Activated CD4-positive, alpha-beta memory T cell treated with anti-CD3 and anti-CD28 coated beads for 36 hours (primary cell): ENCODE measurements at regions of chr19 and their contacts with region 1.

Region 1: GRCh38 chr19:40444192-40445028 is at the start of gene SERTAD3:
- DNase-seq: peak; percentile 97
- H3K4me3 Mint-ChIP-seq: peak within 1 kb of the TSS; percentile 97
- H3K27ac Mint-ChIP-seq: peak within 1 kb of the TSS; percentile 92
- H3K4me1 Mint-ChIP-seq: peaks cover 14% of the 10 kb centered on the region
- H3K27me3 Mint-ChIP-seq: no peaks in the 10 kb centered on the region
- total RNA-seq, gene SERTAD3: 12.1 to 13.1 TPM

Region 2: GRCh38 chr19:40035996-40036395 is 408.4 kb before region 1 on chr19:
- CTCF ChIA-PET with region 1: no interaction called
- POLR2A ChIA-PET with region 1: no interaction called
- intact Hi-C with region 1: no loop called
- DNase-seq: no peak
- H3K4me3 Mint-ChIP-seq: no peak overlapping the region
- H3K27ac Mint-ChIP-seq: no peak overlapping the region
- H3K4me1 Mint-ChIP-seq: no peaks in the 10 kb centered on the region
- H3K27me3 Mint-ChIP-seq: no peaks in the 10 kb centered on the region

Region 3: DNA sequence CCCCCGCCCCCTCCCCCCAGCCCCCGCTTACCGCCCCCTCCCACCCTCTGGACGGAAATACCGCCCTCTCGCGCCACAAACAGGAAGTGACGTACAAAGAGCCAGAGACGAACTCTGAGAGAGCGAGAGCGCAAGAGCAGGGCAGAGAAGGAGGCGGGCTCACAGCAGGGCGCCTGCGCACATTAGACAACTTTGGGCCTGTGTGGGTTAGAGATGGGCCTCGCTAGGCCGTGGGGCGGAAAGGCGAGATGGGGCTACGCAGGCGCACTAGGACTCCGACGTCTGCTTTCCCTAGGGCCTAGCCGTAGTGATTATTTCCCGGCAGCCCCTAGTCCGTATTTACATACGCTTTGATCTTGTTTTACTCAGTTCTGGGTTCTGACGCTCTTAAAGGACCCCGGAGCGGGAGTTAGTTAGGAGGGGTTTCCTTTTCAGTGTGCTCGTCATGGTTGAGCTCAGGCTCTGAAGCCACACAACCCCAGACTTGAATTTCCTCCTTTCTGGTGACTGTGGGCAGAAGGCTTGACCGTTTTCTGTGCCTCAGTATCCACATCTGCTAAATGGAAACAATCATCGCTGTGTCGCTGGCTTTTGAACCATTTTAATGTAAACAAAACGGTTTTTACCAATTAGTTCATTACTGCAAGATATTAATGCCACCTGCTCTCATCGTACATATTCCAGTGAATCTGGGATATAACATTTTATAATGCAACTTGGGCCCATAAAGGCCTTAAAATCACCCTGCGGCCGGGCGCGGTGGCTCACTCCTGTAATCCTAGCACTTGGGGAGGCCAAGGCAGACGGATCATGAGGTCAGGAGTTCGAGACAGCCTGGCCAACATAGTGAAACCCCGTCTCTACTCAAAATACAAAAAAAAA is 158.8 kb before region 1 on chr19:
- CTCF ChIA-PET with region 1: no interaction called
- POLR2A ChIA-PET with region 1: no interaction called
- intact Hi-C with region 1: loop called (anchors 1 kb)
- DNase-seq: peak; percentile 99
- H3K4me3 Mint-ChIP-seq: peak overlapping the region; percentile 87
- H3K27ac Mint-ChIP-seq: peak overlapping the region; percentile 99
- H3K4me1 Mint-ChIP-seq: peaks cover 43% of the 10 kb centered on the region
- H3K27me3 Mint-ChIP-seq: no peaks in the 10 kb centered on the region

Region 4: DNA sequence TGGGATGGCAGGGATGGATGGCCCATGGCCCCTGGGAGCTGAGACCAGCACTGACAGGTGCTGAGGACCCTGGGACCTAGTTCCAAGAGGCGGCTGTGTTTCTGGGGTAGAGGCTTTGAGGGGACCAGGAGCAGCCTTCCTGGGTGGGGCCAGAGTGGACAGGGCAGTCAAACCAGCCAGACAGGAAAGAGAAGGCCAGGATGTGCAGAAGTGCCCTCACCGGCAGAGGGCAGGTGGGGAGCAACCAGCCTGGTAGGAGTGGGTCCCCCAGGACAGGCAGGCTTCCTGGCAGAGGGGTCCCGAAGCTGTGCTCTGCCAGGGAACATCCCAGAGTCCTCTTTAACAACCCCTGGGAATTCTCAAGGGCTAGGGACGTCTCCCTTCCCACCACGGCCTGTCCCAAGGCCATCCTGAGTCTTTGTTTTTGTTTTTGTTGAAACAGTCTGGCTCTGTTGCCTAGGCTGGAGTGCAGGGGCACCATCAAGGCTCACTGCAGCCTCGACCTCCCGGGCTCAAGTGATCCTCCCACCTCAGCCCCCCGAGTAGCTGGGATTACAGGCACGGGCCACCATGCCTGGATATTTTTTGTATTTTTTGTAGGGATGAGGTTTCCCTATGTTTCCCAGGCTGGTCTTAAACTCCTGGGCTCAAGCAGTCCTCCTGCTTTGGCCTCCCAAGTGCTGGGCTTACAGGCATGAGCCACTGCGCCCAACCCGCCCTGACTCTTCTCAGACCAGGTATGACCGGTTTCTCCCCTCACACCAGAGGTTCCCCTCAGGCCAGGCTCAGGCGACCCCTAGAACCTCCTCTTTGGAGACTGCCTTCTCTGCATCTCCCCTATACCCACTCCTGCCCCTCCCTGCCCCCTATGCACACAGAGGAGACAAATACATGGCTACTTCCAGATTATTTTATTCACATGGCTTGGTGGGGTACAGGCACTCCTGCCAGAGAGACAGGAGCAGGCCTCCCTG is 51.3 kb before region 1 on chr19:
- CTCF ChIA-PET with region 1: no interaction called
- POLR2A ChIA-PET with region 1: no interaction called
- intact Hi-C with region 1: no loop called
- DNase-seq: no peak
- H3K4me3 Mint-ChIP-seq: no peak overlapping the region
- H3K27ac Mint-ChIP-seq: no peak overlapping the region
- H3K4me1 Mint-ChIP-seq: no peaks in the 10 kb centered on the region
- H3K27me3 Mint-ChIP-seq: no peaks in the 10 kb centered on the region

Region 5: DNA sequence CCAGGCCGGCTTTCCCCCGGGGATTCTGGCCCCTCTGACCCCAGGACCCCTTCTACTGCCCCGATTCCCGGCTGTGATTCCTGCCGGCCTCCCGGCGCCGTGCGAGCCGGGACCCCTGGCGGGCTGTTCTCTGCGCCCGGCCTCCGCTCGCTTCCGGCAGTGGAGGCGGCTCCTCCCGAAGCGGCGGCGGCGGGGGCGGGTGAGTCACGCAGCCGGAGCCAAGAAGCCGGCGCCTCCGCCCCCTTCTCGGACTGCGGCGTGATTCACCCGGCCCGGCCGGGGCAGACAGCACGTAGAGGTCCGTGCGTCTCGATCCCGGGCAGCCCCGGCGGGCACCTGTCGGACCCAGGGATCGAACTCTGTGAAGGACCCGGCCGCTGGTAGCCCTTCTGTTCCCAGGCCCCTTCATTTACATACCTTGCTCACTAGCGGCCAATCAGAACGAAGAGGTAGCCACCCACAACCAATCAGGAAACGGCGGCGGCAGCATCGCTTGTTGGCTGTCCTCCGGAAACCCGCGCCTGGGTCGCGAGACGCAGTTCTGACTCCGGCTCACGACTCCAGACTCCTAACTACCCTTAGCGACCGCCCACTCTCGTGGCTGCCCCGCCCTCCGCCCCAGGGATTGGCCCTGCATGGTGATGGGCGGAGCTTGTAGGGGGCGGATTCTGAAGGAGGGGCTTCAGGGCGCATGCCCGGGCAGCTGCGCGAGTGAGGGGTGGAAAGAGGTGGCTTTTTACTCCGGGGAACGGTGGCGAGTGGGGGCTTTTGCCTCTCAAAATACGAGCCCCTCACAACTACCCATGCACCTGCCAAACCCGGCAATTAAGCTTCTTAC is 18.7 kb before region 1 on chr19 and contains the start of gene SERTAD1:
- CTCF ChIA-PET with region 1: interaction called, 16 read pairs
- POLR2A ChIA-PET with region 1: interaction called, 25 read pairs
- intact Hi-C with region 1: loop called (anchors 1 kb)
- DNase-seq: peak; percentile 100
- H3K4me3 Mint-ChIP-seq: peak within 1 kb of the TSS; percentile 81
- H3K27ac Mint-ChIP-seq: peak within 1 kb of the TSS; percentile 88
- H3K4me1 Mint-ChIP-seq: peaks cover 17% of the 10 kb centered on the region
- H3K27me3 Mint-ChIP-seq: no peaks in the 10 kb centered on the region
- total RNA-seq, gene SERTAD1: 11.5 to 12.6 TPM

Region 6: DNA sequence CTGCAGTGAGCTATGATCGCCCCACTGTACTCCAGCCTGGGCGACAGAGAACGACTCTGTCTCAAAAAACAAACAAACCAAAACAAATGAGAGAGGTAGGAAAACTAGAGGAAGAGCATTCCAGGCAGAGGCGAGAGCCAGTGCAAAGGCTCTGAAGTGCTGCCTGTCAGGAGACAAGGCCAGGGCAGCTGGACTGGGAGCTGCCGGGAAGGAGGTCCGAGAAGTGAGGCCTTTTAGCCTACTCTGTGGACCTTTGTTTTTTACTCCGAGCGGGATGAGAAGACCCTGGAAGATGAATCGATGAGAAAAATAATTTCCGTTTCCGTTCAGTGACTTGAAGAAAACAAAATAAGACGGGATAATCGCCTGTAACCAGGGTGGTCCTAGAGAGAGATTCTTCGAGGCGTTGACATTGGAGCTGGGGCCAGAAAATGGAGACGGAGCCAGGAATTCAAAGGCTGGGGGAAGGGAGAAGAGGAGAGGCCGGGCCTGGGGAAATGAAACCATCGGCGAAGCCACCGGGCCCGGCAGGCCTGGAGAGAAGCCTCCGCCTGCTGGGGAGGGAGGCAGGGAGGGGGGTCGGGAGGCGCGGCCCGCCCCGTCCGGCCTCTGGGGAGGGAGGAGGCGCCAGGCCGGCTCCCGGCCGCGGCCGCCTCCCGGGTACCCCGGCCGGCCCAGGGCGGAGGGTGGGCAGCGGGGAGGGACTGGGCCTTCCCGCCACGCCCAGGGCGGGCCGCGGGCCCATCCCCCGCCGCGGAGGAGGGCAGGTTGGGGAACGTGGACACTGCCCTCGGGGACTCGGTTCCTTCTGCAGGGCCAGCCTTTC is 10.8 kb before region 1 on chr19:
- CTCF ChIA-PET with region 1: interaction called, 3 read pairs
- POLR2A ChIA-PET with region 1: interaction called, 9 read pairs
- intact Hi-C with region 1: loop called (anchors 1 kb)
- DNase-seq: peak; percentile 69
- H3K4me3 Mint-ChIP-seq: peak overlapping the region; percentile 80
- H3K27ac Mint-ChIP-seq: peak overlapping the region; percentile 88
- H3K4me1 Mint-ChIP-seq: peaks cover 6% of the 10 kb centered on the region
- H3K27me3 Mint-ChIP-seq: no peaks in the 10 kb centered on the region

Region 7: DNA sequence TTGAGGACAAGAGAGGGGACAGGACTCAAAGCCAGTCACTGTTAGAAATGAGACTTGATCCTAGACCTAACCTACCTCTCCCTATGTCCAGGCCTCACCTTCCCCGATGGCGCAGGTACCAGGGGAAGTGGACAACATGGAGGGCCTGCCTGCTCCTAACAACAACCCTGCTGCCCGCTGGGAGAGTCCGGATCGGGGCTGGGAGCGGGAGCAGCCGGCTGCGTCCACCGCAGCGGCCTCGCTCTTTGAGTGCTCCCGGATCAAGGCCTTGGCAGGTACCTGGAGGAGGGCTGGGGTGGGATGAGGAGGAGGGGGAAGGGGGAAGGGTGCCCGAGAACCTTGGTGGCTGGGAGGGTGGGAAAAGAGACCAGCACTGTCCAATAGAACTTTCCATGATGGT is 28.1 kb after region 1 on chr19:
- CTCF ChIA-PET with region 1: no interaction called
- POLR2A ChIA-PET with region 1: no interaction called
- intact Hi-C with region 1: no loop called
- DNase-seq: no peak
- H3K4me3 Mint-ChIP-seq: no peak overlapping the region
- H3K27ac Mint-ChIP-seq: no peak overlapping the region
- H3K4me1 Mint-ChIP-seq: peaks cover 2% of the 10 kb centered on the region
- H3K27me3 Mint-ChIP-seq: peaks cover 5% of the 10 kb centered on the region

Region 8: GRCh38 chr19:40570313-40571004 is 126.0 kb after region 1 on chr19:
- CTCF ChIA-PET with region 1: no interaction called
- POLR2A ChIA-PET with region 1: no interaction called
- intact Hi-C with region 1: loop called (anchors 1 kb)
- DNase-seq: peak; percentile 98
- H3K4me3 Mint-ChIP-seq: peak overlapping the region; percentile 67
- H3K27ac Mint-ChIP-seq: peak overlapping the region; percentile 61
- H3K4me1 Mint-ChIP-seq: peaks cover 16% of the 10 kb centered on the region
- H3K27me3 Mint-ChIP-seq: peaks cover 17% of the 10 kb centered on the region

Region 9: DNA sequence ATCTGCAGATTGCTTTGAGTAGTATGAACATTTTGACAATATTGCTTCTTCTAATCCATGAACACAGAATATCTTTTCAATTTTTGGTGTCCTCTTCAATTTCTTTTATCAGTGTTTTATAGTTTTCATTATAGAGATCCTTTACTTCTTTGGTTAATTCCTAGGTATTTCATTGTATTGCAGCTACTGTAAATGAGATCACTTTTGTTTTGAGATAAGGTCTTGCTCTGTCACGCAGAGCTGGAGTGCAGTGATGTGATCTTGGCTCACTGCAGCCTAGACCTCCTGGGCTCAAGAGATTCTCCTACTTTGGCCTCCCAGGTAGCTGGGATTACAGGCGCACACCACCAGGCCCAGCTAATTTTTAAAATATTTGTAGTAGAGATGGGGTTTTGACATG is 427.8 kb after region 1 on chr19:
- CTCF ChIA-PET with region 1: no interaction called
- POLR2A ChIA-PET with region 1: no interaction called
- intact Hi-C with region 1: no loop called
- DNase-seq: no peak
- H3K4me3 Mint-ChIP-seq: no peak overlapping the region
- H3K27ac Mint-ChIP-seq: no peak overlapping the region
- H3K4me1 Mint-ChIP-seq: peaks cover 7% of the 10 kb centered on the region
- H3K27me3 Mint-ChIP-seq: peaks cover 8% of the 10 kb centered on the region